Activated CD4-positive, alpha-beta memory T cell treated with anti-CD3 and anti-CD28 coated beads for 36 hours (primary cell): ENCODE measurements at regions of chr5 and their contacts with region 1.

Region 1: GRCh38 chr5:119328753-119329602 is 26.8 kb upstream of the TNFAIP8 start:
- DNase-seq: peak; percentile 76
- H3K4me3 Mint-ChIP-seq: peak overlapping the region; percentile 35
- H3K27ac Mint-ChIP-seq: peak overlapping the region; percentile 96
- H3K4me1 Mint-ChIP-seq: peaks cover 95% of the 10 kb centered on the region
- H3K27me3 Mint-ChIP-seq: no peaks in the 10 kb centered on the region

Region 2: GRCh38 chr5:119070828-119071572 is 258.0 kb before region 1 on chr5 and contains the start of gene DMXL1:
- CTCF ChIA-PET with region 1: no interaction called
- POLR2A ChIA-PET with region 1: no interaction called
- intact Hi-C with region 1: loop called (anchors 1 kb)
- DNase-seq: peak; percentile 99
- H3K4me3 Mint-ChIP-seq: peak within 1 kb of the TSS; percentile 85
- H3K27ac Mint-ChIP-seq: peak within 1 kb of the TSS; percentile 96
- H3K4me1 Mint-ChIP-seq: peaks cover 40% of the 10 kb centered on the region
- H3K27me3 Mint-ChIP-seq: peaks cover 2% of the 10 kb centered on the region
- total RNA-seq, gene DMXL1: 24.2 to 26.9 TPM

Region 3: GRCh38 chr5:119255571-119256356 is 73.2 kb before region 1 on chr5:
- CTCF ChIA-PET with region 1: no interaction called
- POLR2A ChIA-PET with region 1: no interaction called
- intact Hi-C with region 1: no loop called
- DNase-seq: no peak
- H3K4me3 Mint-ChIP-seq: no peak overlapping the region
- H3K27ac Mint-ChIP-seq: no peak overlapping the region
- H3K4me1 Mint-ChIP-seq: peaks cover 4% of the 10 kb centered on the region
- H3K27me3 Mint-ChIP-seq: no peaks in the 10 kb centered on the region

Region 4: DNA sequence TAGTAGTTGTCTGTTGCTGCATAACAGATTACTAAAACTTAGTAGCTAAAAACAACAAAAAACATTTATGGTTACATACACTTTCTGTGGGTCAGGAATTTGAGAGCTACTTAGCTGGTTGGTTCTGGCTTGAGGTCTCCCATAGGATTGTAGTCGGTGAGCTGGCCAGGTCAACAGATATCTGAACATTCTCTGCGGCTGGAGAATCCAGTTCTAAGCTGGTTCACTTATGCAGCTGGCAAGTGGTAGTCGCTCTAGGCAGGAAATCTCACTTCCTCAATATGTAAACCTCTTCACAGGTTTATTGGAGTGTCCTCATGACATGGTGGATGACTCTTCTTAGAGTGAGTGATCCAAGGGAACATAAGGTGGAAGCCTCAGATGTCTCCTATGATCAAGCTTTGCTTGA is 38.8 kb before region 1 on chr5:
- CTCF ChIA-PET with region 1: interaction called, 4 read pairs
- POLR2A ChIA-PET with region 1: interaction called, 5 read pairs
- intact Hi-C with region 1: loop called (anchors 1 kb)
- DNase-seq: no peak
- H3K4me3 Mint-ChIP-seq: peak overlapping the region; percentile 28
- H3K27ac Mint-ChIP-seq: peak overlapping the region; percentile 93
- H3K4me1 Mint-ChIP-seq: peaks cover 86% of the 10 kb centered on the region
- H3K27me3 Mint-ChIP-seq: no peaks in the 10 kb centered on the region

Region 5: GRCh38 chr5:119309326-119309725 is 19.7 kb before region 1 on chr5:
- CTCF ChIA-PET with region 1: interaction called, 45 read pairs
- POLR2A ChIA-PET with region 1: interaction called, 3 read pairs
- intact Hi-C with region 1: loop called (anchors 1 kb)
- DNase-seq: no peak
- H3K4me3 Mint-ChIP-seq: peak overlapping the region; percentile 43
- H3K27ac Mint-ChIP-seq: peak overlapping the region; percentile 90
- H3K4me1 Mint-ChIP-seq: peaks cover 94% of the 10 kb centered on the region
- H3K27me3 Mint-ChIP-seq: no peaks in the 10 kb centered on the region

Region 6: DNA sequence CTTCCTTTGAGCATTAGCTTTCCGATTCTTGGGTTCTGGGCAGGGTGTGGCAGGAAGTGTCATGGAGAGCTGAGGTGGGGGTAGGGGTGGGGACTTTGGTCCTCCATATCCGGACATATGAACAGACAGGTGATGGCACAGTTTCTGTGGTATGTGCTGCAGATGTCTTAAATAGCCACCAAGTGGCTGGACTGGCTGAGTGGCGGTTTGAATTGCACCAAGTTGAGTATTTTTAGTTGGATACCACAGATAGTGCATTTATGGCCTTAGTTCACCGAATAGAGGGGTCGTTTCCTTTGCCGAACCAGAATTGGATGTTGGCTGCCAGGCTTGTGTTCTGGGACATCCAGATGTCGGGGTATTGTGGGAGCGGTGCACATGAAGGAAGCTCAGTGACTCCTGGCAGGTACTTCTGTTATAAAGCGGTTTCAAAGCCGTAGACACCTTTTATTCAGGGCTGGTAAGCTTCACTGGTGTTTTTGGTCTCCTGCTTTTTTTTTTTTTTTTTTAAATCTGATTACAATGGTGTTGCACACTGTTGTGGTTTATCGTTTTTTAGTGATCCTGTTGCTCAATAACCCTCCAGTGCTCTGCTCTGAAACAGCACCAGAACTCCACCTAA is 11.7 kb after region 1 on chr5:
- CTCF ChIA-PET with region 1: interaction called, 11 read pairs
- POLR2A ChIA-PET with region 1: interaction called, 46 read pairs
- intact Hi-C with region 1: loop called (anchors 1 kb)
- DNase-seq: peak; percentile 78
- H3K4me3 Mint-ChIP-seq: peak overlapping the region; percentile 66
- H3K27ac Mint-ChIP-seq: peak overlapping the region; percentile 93
- H3K4me1 Mint-ChIP-seq: peaks cover 94% of the 10 kb centered on the region
- H3K27me3 Mint-ChIP-seq: no peaks in the 10 kb centered on the region

Region 7: GRCh38 chr5:119367502-119368237 is 38.7 kb after region 1 on chr5:
- CTCF ChIA-PET with region 1: interaction called, 3 read pairs
- POLR2A ChIA-PET with region 1: interaction called, 504 read pairs
- intact Hi-C with region 1: loop called (anchors 1 kb)
- DNase-seq: no peak
- H3K4me3 Mint-ChIP-seq: peak overlapping the region; percentile 55
- H3K27ac Mint-ChIP-seq: peak overlapping the region; percentile 90
- H3K4me1 Mint-ChIP-seq: peaks cover 83% of the 10 kb centered on the region
- H3K27me3 Mint-ChIP-seq: no peaks in the 10 kb centered on the region

Region 8: GRCh38 chr5:119828541-119828940 is 499.6 kb after region 1 on chr5:
- CTCF ChIA-PET with region 1: no interaction called
- POLR2A ChIA-PET with region 1: no interaction called
- intact Hi-C with region 1: no loop called
- DNase-seq: no peak
- H3K4me3 Mint-ChIP-seq: no peak overlapping the region
- H3K27ac Mint-ChIP-seq: no peak overlapping the region
- H3K4me1 Mint-ChIP-seq: no peaks in the 10 kb centered on the region
- H3K27me3 Mint-ChIP-seq: no peaks in the 10 kb centered on the region